B cell (primary cell): ENCODE measurements at regions of chr22 and their contacts with region 1.

Region 1: GRCh38 chr22:36977947-36978660 is 41.1 kb downstream of the TST start:
- DNase-seq: peak; percentile 91
- ATAC-seq: peak; percentile 86
- H3K4me3 ChIP-seq: peak overlapping the region; percentile 55 to 93 (median 73)
- H3K4me3 Mint-ChIP-seq: peak overlapping the region; percentile 98
- H3K27ac ChIP-seq: peak overlapping the region; percentile 5 to 71
- H3K27ac Mint-ChIP-seq: peak overlapping the region; percentile 96
- H3K4me1 ChIP-seq: peaks cover 0 to 11% of the 10 kb centered on the region in 2 donors
- H3K4me1 Mint-ChIP-seq: peaks cover 9% of the 10 kb centered on the region
- H3K27me3 ChIP-seq: peaks cover 0 to 6% (median 0%) of the 10 kb centered on the region in 4 experiments
- H3K27me3 Mint-ChIP-seq: no peaks in the 10 kb centered on the region
- CTCF ChIP-seq: peak; percentile 81

Region 2: DNA sequence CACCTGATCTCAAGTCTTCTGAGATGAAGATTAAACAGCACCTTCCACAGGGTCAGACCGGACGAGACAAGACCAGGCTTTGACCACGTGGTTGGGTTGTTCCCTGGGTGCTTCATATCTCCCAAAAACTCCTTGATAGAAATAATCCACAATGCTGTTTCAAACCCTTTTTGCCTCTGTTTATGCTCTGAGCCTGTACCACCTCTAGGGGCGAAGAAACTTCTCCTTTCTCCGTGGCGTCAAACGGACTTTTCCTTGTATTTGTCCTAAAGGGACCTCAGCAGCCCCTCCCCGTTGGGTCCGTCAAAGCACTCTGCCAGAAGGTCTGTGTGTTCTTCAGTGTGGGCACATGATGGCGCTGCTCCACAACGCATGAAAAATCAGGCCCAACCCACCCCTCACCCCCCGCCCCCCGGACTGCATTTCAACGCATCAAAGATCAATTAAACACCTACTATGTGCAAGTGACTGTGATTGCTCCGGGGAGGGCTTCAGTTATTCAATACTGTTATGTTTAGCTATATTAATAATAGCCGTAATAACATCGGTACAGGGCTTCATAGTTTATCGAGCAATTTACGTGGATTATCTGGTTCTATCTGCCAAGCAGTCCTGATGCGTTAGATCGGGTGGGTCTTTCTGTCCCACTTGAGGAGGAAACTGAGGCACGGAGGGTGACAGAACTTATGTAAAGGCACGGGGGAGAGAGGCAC is 431.9 kb before region 1 on chr22:
- CTCF ChIA-PET with region 1: interaction called, 4 read pairs
- POLR2A ChIA-PET with region 1: no interaction called
- intact Hi-C with region 1: loop called (anchors 2 kb)
- DNase-seq: peak; percentile 67
- ATAC-seq: peak; percentile 79
- H3K4me3 ChIP-seq: no peak overlapping the region
- H3K4me3 Mint-ChIP-seq: no peak overlapping the region
- H3K27ac ChIP-seq: no peak overlapping the region
- H3K27ac Mint-ChIP-seq: no peak overlapping the region
- H3K4me1 ChIP-seq: peaks cover 15 to 32% of the 10 kb centered on the region in 2 donors
- H3K4me1 Mint-ChIP-seq: peaks cover 19% of the 10 kb centered on the region
- H3K27me3 ChIP-seq: no peaks in the 10 kb centered on the region
- H3K27me3 Mint-ChIP-seq: no peaks in the 10 kb centered on the region
- CTCF ChIP-seq: peak; percentile 67

Region 3: GRCh38 chr22:36775964-36776669 is 202.0 kb before region 1 on chr22 and contains the start of gene IFT27:
- CTCF ChIA-PET with region 1: interaction called, 40 read pairs
- POLR2A ChIA-PET with region 1: interaction called, 8 read pairs
- intact Hi-C with region 1: no loop called
- DNase-seq: peak; percentile 99
- ATAC-seq: peak; percentile 87
- H3K4me3 ChIP-seq: peak within 1 kb of the TSS; percentile 60 to 82 (median 73)
- H3K4me3 Mint-ChIP-seq: peak within 1 kb of the TSS; percentile 96
- H3K27ac ChIP-seq: peak within 1 kb of the TSS; percentile 80 to 91
- H3K27ac Mint-ChIP-seq: peak within 1 kb of the TSS; percentile 95
- H3K4me1 ChIP-seq: peaks cover 13 to 17% of the 10 kb centered on the region in 2 donors
- H3K4me1 Mint-ChIP-seq: peaks cover 16% of the 10 kb centered on the region
- H3K27me3 ChIP-seq: no peaks in the 10 kb centered on the region
- H3K27me3 Mint-ChIP-seq: no peaks in the 10 kb centered on the region
- CTCF ChIP-seq: no peak
- total RNA-seq, gene IFT27: 40.3 and 42.8 TPM in 2 replicates

Region 4: GRCh38 chr22:36856121-36856791 is 121.8 kb before region 1 on chr22:
- CTCF ChIA-PET with region 1: interaction called, 55 read pairs
- POLR2A ChIA-PET with region 1: interaction called, 6 read pairs
- intact Hi-C with region 1: loop called (anchors 1 kb)
- DNase-seq: peak; percentile 92
- ATAC-seq: peak; percentile 44
- H3K4me3 ChIP-seq: no peak overlapping the region
- H3K4me3 Mint-ChIP-seq: peak overlapping the region; percentile 66
- H3K27ac ChIP-seq: no peak overlapping the region
- H3K27ac Mint-ChIP-seq: peak overlapping the region; percentile 78
- H3K4me1 ChIP-seq: peaks cover 28 to 41% of the 10 kb centered on the region in 2 donors
- H3K4me1 Mint-ChIP-seq: peaks cover 39% of the 10 kb centered on the region
- H3K27me3 ChIP-seq: no peaks in the 10 kb centered on the region
- H3K27me3 Mint-ChIP-seq: no peaks in the 10 kb centered on the region
- CTCF ChIP-seq: peak; percentile 100

Region 5: DNA sequence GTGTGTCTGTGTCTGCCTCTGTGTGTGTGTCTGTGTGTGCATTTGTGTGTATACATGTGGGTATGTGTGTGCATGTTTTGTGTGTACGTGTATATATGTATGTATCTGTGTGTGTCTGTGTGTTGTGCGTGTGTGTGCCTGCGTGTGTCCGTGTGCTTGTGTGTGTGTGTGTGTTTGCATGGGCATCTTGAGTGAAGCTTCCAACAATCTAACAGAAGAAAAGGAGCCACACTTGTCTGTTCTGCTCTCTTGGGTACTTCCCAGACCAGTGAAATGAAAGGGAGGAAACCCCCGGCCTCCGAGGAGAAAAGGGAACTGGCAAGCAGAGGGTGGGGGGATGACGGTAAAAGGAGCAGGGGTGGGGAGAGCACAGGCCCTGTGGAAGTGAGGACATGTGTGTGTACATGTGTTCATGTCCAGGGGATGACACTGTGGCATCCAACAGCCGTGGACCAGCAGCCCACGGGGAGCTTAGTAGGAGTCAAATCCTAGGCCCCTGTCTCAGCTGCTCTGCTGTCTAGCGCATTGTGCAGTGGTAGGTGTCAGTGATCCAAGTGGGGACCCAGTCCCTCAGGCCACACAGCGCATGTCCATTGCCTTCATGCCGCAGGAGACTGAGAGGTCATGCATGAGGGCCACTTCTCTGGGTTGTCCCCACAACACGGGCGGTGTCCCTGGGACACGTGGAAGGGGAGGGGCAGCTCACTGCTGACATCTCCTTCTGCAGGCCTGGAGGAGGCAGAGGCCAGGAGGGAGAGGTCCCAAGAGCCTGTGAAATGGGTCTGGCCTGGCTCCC is 56.6 kb before region 1 on chr22:
- CTCF ChIA-PET with region 1: no interaction called
- POLR2A ChIA-PET with region 1: no interaction called
- intact Hi-C with region 1: no loop called
- DNase-seq: peak; percentile 69
- ATAC-seq: peak; percentile 84
- H3K4me3 ChIP-seq: no peak overlapping the region
- H3K4me3 Mint-ChIP-seq: peak overlapping the region; percentile 48
- H3K27ac ChIP-seq: peak overlapping the region; percentile 11 to 40
- H3K27ac Mint-ChIP-seq: peak overlapping the region; percentile 80
- H3K4me1 ChIP-seq: peaks cover 11 to 14% of the 10 kb centered on the region in 2 donors
- H3K4me1 Mint-ChIP-seq: peaks cover 31% of the 10 kb centered on the region
- H3K27me3 ChIP-seq: no peaks in the 10 kb centered on the region
- H3K27me3 Mint-ChIP-seq: no peaks in the 10 kb centered on the region
- CTCF ChIP-seq: no peak

Region 6: DNA sequence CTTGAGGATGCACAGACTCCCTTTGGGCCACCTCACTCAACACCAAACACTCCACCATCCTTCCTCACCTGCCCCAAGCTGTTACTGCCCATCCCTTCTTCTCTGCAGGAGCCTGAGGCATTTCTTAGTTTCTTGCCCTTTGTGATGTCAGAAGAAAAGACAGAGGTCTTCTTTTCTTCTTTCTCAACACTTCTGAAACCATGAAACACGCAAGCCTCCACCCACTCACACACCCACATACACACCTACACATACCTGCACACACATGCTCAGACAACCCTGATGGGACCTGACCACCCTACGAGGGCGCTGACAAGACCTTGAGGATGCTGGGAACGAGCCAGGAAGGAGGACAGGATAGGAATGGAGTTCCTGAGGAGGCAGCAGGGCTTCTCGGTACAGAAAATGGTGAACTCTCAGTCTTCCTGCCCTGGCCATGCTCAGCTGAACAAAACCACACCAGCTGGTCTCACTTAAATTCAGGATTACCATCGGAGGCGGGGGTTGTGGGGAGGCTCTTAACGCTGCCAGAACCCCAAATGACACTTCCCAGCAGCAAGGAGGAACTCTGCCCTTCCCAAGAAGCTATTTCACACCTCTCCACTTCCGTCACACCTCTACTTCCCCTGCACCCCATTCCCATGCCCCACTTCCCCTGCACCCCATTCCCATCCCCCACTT is 23.8 kb before region 1 on chr22:
- CTCF ChIA-PET with region 1: no interaction called
- POLR2A ChIA-PET with region 1: no interaction called
- intact Hi-C with region 1: no loop called
- DNase-seq: no peak
- ATAC-seq: no peak
- H3K4me3 ChIP-seq: peak overlapping the region in 1 of 5 experiments; percentile 42
- H3K4me3 Mint-ChIP-seq: no peak overlapping the region
- H3K27ac ChIP-seq: no peak overlapping the region
- H3K27ac Mint-ChIP-seq: no peak overlapping the region
- H3K4me1 ChIP-seq: no peaks in the 10 kb centered on the region
- H3K4me1 Mint-ChIP-seq: no peaks in the 10 kb centered on the region
- H3K27me3 ChIP-seq: peaks cover 0 to under 1% (median 0%) of the 10 kb centered on the region in 4 experiments
- H3K27me3 Mint-ChIP-seq: peaks cover 22% of the 10 kb centered on the region
- CTCF ChIP-seq: no peak

Region 7: GRCh38 chr22:36966851-36967540 is 11.1 kb before region 1 on chr22:
- CTCF ChIA-PET with region 1: interaction called, 18 read pairs
- POLR2A ChIA-PET with region 1: no interaction called
- intact Hi-C with region 1: no loop called
- DNase-seq: no peak
- ATAC-seq: no peak
- H3K4me3 ChIP-seq: no peak overlapping the region
- H3K4me3 Mint-ChIP-seq: no peak overlapping the region
- H3K27ac ChIP-seq: no peak overlapping the region
- H3K27ac Mint-ChIP-seq: no peak overlapping the region
- H3K4me1 ChIP-seq: no peaks in the 10 kb centered on the region
- H3K4me1 Mint-ChIP-seq: no peaks in the 10 kb centered on the region
- H3K27me3 ChIP-seq: peaks cover 0 to 2% (median under 1%) of the 10 kb centered on the region in 4 experiments
- H3K27me3 Mint-ChIP-seq: no peaks in the 10 kb centered on the region
- CTCF ChIP-seq: no peak

Region 8: GRCh38 chr22:37199103-37199759 is 221.1 kb after region 1 on chr22:
- CTCF ChIA-PET with region 1: interaction called, 3 read pairs
- POLR2A ChIA-PET with region 1: no interaction called
- intact Hi-C with region 1: loop called (anchors 5 kb)
- DNase-seq: peak; percentile 99
- ATAC-seq: peak; percentile 96
- H3K4me3 ChIP-seq: peak overlapping the region; percentile 59 to 89 (median 80)
- H3K4me3 Mint-ChIP-seq: peak overlapping the region; percentile 93
- H3K27ac ChIP-seq: peak overlapping the region; percentile 85 to 90
- H3K27ac Mint-ChIP-seq: peak overlapping the region; percentile 97
- H3K4me1 ChIP-seq: peaks cover 21 to 28% of the 10 kb centered on the region in 2 donors
- H3K4me1 Mint-ChIP-seq: peaks cover 26% of the 10 kb centered on the region
- H3K27me3 ChIP-seq: no peaks in the 10 kb centered on the region
- H3K27me3 Mint-ChIP-seq: no peaks in the 10 kb centered on the region
- CTCF ChIP-seq: peak; percentile 97